Sciatic nerve (tissue), 2 donors: ENCODE measurements at regions of chr17 and their contacts with region 1.

Region 1: DNA sequence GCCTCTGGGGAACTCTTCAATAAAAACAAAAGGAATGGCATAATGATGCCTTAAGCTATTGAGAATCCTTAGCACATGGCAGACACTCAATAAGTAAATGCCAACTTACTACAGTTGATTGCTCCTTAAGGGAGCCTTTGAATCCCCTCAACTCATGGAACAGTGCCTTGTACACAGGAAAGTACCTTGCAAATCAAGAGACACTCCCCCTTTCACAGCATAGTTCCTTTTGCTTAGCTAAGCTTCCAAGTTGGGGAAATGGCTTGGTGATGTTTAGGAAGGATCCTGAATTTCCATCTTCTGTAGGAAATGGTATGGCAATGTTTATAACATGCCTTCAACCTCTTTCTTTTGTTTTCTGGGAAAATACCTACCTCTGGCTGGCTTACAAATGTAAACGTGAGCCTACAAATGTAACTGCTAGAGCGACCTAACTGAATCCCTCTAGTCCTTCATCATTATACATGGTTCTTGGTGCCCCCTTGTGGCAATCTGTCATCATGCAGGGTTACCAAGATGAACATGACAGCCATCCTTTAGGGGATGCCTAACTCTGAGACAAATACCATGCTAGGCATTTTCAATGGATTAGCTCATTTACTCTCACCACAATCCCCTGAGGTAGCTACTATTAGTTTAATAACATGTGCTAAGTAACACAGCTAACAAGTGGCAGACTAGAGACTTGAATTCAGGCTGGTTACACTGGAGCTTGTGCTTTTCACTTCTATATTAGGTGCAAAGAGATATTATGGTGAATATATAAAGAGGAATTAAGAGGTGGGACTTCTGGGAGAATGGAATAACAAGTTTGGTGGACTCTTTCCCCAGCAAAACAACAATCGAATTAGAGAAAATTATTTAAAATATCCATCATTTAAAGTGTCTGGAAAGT is 65.0 kb downstream of the MMD start:
- DNase-seq: peak; percentile 77
- ATAC-seq: peak; percentile 72

Region 2: GRCh38 chr17:55210292-55210691 is 146.4 kb before region 1 on chr17:
- intact Hi-C with region 1: no loop called
- DNase-seq: no peak
- ATAC-seq: no peak

Region 3: DNA sequence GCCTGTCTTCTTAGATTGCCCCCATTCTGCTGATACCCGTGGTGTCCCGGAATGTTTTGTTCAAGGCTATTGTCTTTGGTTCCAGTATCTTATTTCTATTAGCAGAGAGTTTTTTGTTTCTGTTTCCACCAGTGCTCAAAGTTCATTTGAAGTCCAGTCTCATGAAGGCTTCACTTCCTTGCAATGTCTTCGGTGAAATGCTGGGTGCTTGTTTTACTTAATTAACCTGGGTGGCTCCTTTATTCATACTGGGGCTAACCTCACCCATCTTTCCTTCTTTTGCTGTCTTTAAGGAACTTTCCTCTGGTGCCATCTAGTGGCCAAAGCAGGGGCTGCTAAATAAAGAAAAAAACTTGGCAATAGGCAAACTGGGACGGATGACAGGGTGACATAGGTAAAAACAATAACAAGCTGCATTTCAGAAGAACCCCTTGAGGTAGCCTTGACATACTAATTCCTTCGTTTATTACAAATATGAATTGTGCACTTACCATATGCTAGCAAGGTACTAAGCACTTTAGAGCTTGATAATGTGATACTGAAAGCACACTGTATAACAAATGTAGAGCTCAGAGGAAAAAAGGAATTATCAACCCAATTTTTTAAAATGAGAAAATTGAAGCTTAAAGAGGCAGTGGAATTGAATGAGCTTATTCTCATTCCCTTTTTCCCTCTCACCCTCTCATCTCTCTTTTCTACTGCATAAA is 157.4 kb after region 1 on chr17:
- intact Hi-C with region 1: loop called (anchors 10 kb)
- DNase-seq: peak; percentile 83
- ATAC-seq: peak; percentile 73